OCI-LY7 (cell line): ENCODE measurements at regions of chr13 and their contacts with region 1.

Region 1: GRCh38 chr13:112968380-112968907 is 570 bp upstream of the MCF2L start:
- DNase-seq: peak; percentile 24
- H3K4me3 ChIP-seq: peak overlapping the region; percentile 78
- H3K27ac ChIP-seq: no peak overlapping the region
- H3K4me1 ChIP-seq: peaks cover 8% of the 10 kb centered on the region
- CTCF ChIP-seq: no peak

Region 2: DNA sequence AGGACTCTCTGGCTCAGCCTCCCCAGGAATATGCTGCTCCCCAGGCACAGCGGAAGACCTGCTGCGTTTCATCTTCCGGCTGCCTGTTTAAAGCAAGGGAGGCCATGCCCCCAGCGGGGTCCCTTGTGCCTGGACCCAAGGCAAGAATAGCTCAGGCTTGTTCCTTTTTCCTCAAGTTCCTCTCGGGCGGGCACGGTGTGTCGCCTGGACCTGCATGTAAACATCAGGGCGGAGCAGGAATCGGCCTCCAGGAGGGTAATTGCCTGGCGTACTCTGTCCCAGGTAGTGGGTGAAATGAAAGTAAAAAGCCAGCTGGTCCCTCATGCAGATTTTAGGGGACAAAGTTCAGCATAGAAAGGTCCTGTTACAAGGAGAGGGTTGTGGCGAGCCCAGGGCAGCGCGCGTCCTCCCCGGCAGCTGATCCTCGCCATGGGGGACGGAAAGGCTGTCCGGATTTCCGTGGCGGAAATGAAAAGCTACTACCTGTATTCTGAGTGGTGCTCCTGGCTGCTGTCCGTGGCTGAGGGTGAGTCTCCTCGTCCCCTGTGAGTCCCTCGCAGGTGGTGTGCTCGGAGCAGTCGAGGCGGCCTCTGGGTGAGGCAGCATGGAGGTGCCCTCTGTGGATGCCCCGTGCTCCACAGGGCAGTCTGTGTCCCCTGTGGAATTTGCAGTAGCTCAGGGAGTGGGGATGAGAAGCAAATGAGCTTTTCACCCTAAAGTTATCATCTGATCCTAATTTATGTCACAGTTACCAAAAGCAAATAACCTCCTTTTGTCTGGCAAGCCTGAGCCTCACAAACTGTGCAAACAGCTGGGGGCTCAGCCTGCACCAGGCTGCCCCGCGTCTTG is 16.7 kb after region 1 on chr13:
- CTCF ChIA-PET with region 1: interaction called, 13 read pairs
- POLR2A ChIA-PET with region 1: no interaction called
- intact Hi-C with region 1: no loop called
- DNase-seq: no peak
- H3K4me3 ChIP-seq: no peak overlapping the region
- H3K27ac ChIP-seq: no peak overlapping the region
- H3K4me1 ChIP-seq: no peaks in the 10 kb centered on the region
- CTCF ChIP-seq: no peak